ENCODE measurements at regions of chr2 and their contacts with region 1.

Region 1: DNA sequence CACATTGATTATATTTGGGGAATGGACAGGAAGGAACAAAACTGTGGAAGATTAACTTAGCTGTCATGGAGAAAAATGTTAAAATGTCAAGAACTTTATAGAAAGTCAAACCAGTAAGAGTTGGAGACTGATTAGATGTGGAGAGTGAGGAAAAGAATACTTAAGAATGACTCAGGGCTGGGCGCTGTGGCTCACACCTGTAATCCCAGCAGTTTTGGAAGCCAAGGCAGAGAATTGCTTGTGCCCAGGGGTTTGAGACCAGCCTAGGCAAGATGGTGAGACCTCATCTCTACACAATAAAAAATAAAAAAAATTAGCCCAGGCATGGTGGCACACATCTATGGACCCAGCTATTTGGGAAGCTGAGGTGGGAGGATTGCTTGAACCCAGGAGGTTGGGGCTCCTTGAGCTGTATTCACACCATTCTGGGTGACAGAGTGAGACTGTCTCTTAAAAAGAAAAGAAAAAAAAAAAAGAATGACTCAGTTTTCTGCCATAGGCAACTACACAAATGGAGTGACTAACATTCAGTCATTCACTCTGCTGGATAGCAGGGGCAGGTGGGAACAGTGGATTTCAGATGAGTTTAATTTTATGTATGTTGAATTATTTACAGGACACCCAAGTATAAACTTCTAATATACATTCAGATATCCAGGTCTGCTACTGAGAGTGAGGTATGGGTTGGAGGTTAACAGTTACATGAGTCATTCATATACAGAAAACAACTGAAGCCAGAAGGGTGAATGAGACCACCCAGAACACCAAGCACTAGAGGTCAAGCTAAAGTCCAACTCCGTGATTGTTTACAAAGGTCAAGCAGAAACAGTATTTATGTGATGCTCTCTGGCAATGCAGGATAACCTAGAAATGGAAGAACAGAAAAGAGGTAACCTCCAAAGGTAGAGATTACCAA is 33.9 kb downstream of the ORC2 start:
- DNase-seq: no peak
- ATAC-seq: no peak
- H3K4me3 ChIP-seq: no peak overlapping the region
- H3K27ac ChIP-seq: no peak overlapping the region
- H3K4me1 ChIP-seq: no peaks in the 10 kb centered on the region
- H3K27me3 ChIP-seq: no peaks in the 10 kb centered on the region
- CTCF ChIP-seq: no peak
- POLR2A ChIP-seq: no peak

Region 2: DNA sequence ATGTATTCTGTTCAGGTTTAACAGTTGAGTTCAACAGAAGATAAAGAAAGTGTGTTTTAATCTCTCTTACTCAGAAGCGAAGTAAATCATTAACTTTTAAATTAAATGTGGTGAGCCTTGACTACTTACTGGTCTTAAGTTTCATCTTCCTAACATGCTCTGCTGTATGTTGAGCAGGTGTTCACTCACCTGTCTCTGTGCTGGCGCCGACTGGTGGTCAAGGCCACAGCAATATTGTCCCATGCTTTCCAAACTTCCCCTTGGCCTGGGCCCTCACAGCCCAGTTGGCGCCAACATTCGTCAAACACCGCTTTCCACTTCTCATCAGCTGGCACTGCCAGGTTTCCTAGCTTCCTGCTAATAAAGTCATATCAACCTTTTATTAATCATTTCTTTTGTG is 785.9 kb after region 1 on chr2:
- intact Hi-C with region 1: loop called in 1 of 10 experiments (anchors 10 kb)
- DNase-seq: no peak
- ATAC-seq: no peak
- H3K4me3 ChIP-seq: no peak overlapping the region
- H3K27ac ChIP-seq: no peak overlapping the region
- H3K4me1 ChIP-seq: no peaks in the 10 kb centered on the region
- H3K27me3 ChIP-seq: no peaks in the 10 kb centered on the region
- CTCF ChIP-seq: no peak
- POLR2A ChIP-seq: no peak